Aorta (tissue), 5 donors: ENCODE measurements at regions of chr2 and their contacts with region 1.

Region 1: GRCh38 chr2:160387558-160388262 is 105.9 kb downstream of the RBMS1 start:
- DNase-seq: peak; percentile 80 to 83
- ATAC-seq: peak; percentile 92
- H3K4me3 ChIP-seq: no peak overlapping the region
- H3K27ac ChIP-seq: peak overlapping the region; percentile 31 to 41
- H3K4me1 ChIP-seq: peaks cover 7 to 16% of the 10 kb centered on the region in 2 donors
- H3K27me3 ChIP-seq: no peaks in the 10 kb centered on the region

Region 2: GRCh38 chr2:160324161-160324800 is 63.4 kb before region 1 on chr2:
- intact Hi-C with region 1: loop called in 1 of 2 experiments (anchors 10 kb)
- DNase-seq: peak; percentile 56 to 81
- ATAC-seq: peak; percentile 68
- H3K4me3 ChIP-seq: no peak overlapping the region
- H3K27ac ChIP-seq: no peak overlapping the region
- H3K4me1 ChIP-seq: peaks cover 7 to 11% of the 10 kb centered on the region in 2 donors
- H3K27me3 ChIP-seq: no peaks in the 10 kb centered on the region

Region 3: DNA sequence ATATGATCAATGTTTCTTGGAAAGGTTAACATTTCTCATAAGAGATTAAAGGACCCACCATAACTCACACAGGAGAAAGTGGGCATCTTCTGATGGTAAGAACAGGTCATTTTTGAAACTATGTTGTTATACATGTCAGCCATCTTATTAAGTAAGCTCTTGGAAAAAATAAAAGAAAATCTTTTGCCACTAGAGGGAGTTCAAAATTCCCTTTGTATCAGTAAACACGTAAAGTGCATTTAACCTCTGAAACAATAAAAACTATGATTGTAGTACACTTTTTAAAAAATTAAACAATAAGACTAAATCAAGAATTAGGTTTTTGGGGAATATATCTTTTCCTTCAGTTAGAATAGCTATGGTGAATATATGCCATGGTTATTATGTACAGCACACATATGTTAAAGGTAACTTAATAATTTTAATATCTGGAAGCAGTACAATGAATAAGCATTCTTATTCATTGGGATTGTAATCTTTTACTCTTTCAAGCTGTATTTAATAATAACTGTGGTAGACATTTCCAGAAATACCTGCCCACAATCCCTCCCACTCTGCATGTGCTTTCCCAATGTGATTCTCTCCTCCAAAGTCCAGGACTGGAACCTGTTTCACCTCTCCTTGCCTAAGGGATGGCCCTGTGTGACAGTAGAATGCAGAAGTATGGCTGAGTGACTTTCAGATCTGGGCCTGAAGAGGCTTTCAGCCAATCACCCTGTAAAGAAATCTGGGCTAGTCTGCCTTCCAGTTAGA is 41.7 kb after region 1 on chr2:
- intact Hi-C with region 1: no loop called
- DNase-seq: no peak
- ATAC-seq: no peak
- H3K4me3 ChIP-seq: no peak overlapping the region
- H3K27ac ChIP-seq: peak overlapping the region in 1 of 2 donors; percentile 44
- H3K4me1 ChIP-seq: peaks cover 3 to 5% of the 10 kb centered on the region in 2 donors
- H3K27me3 ChIP-seq: no peaks in the 10 kb centered on the region